WTC11 (cell line): ENCODE measurements at regions of chr5 and their contacts with region 1.

Region 1: GRCh38 chr5:111530298-111530740 is 18.0 kb upstream of the STARD4 start:
- DNase-seq: no peak
- ATAC-seq: peak; percentile 36; the same call in 1 of the 2 replicates
- H3K4me3 Mint-ChIP-seq: no peak overlapping the region
- H3K27ac Mint-ChIP-seq: peak overlapping the region; percentile 10; the same call in 1 of the 2 replicates
- H3K4me1 Mint-ChIP-seq: peaks cover 5% of the 10 kb centered on the region
- H3K27me3 Mint-ChIP-seq: no peaks in the 10 kb centered on the region
- CTCF ChIP-seq: no peak

Region 2: DNA sequence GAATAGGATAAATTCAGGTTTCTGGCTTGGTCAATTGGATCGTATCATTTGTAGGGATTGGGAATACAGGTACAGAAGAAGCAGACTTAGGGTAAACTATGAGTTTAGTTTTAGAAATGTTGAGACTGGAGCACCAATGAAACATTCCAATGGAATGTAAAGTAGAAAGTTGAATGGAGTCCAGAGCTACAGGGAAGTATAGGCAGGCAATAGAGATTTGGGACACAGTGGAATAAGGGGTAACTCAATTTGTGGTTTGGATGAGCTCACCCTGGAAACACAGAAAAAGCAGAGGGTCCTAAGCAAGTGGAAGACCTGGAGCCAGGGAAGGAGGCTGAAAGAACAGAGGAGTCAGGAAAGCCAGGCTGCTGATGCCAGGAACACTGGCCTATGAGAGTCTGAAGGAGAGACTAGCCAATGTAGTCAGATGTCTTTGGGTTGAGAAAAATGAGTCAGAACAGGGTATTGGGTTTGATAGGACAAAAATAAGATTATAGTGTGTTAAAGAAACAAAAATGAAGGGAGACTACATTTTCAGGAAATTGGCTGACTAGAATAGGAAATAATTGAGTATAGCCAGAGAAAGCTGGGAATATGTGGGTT is 90.7 kb before region 1 on chr5:
- CTCF ChIA-PET with region 1: no interaction called
- POLR2A ChIA-PET with region 1: no interaction called
- DNase-seq: no peak
- ATAC-seq: no peak
- H3K4me3 Mint-ChIP-seq: no peak overlapping the region
- H3K27ac Mint-ChIP-seq: no peak overlapping the region; the same call in 1 of the 2 replicates
- H3K4me1 Mint-ChIP-seq: no peaks in the 10 kb centered on the region
- H3K27me3 Mint-ChIP-seq: no peaks in the 10 kb centered on the region
- CTCF ChIP-seq: no peak

Region 3: GRCh38 chr5:111512375-111513130 is 17.8 kb before region 1 on chr5 and contains the start of gene STARD4:
- CTCF ChIA-PET with region 1: interaction called, 21 read pairs
- POLR2A ChIA-PET with region 1: interaction called, 6 read pairs
- DNase-seq: peak; percentile 95
- ATAC-seq: peak; percentile 91
- H3K4me3 Mint-ChIP-seq: peak within 1 kb of the TSS; percentile 95
- H3K27ac Mint-ChIP-seq: peak within 1 kb of the TSS; percentile 100
- H3K4me1 Mint-ChIP-seq: peaks cover 53% of the 10 kb centered on the region
- H3K27me3 Mint-ChIP-seq: no peaks in the 10 kb centered on the region
- CTCF ChIP-seq: no peak
- total RNA-seq, gene STARD4: 48.5 to 56.0 TPM (median 53.8 TPM) in 3 replicates

Region 4: GRCh38 chr5:111550279-111551020 is 20.1 kb after region 1 on chr5:
- CTCF ChIA-PET with region 1: interaction called, 53 read pairs
- POLR2A ChIA-PET with region 1: no interaction called
- DNase-seq: peak; percentile 73
- ATAC-seq: peak; percentile 86
- H3K4me3 Mint-ChIP-seq: no peak overlapping the region
- H3K27ac Mint-ChIP-seq: no peak overlapping the region
- H3K4me1 Mint-ChIP-seq: peaks cover 43% of the 10 kb centered on the region
- H3K27me3 Mint-ChIP-seq: no peaks in the 10 kb centered on the region
- CTCF ChIP-seq: no peak; the same call in 1 of the 2 replicates